ENCODE measurements at regions of chr20 and their contacts with region 1.

Region 1: DNA sequence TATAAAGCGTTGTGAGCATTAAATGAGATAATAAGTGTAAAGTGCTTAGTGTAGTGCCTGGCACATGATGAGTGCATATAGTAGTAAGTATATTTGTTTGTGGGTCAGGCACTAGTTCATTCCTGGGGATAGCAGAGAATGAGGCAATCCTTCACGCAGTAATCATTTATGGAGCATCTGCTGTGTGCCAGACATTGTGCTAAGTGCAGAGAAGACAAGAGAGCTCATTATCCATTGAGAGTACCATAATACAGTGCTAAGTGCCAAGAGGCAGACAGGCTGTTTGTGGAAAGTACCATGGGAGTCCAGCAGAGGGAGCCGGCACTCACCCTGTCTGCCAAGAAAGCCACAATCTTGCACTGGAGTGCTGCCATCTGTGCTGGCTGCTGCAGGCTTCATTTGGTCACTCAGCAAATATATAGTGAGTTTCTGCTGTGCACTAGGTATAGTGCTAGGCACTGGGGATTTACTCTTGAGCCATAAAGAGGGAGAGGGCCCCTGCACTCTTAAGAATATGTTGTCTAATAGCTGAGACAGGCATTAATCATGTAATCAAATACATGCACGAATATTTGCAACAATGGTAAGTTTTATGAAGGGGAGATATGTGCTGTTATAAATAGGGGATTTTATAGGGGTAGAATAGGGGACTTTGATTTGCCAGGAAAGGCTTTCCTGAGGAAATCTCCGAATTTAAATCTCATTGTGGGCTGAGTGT is 12.9 kb upstream of the MROH8 start:
- DNase-seq: no peak
- ATAC-seq: peak; percentile 88
- H3K4me3 ChIP-seq: no peak overlapping the region
- H3K27ac ChIP-seq: no peak overlapping the region
- H3K4me1 ChIP-seq: peaks cover 17% of the 10 kb centered on the region
- H3K27me3 ChIP-seq: no peaks in the 10 kb centered on the region
- CTCF ChIP-seq: peak; percentile 80 to 92 (median 91)
- EP300 ChIP-seq: no peak
- POLR2A ChIP-seq: no peak
- RAD21 ChIP-seq: peak; percentile 17; the same call in 1 of the 2 replicates

Region 2: DNA sequence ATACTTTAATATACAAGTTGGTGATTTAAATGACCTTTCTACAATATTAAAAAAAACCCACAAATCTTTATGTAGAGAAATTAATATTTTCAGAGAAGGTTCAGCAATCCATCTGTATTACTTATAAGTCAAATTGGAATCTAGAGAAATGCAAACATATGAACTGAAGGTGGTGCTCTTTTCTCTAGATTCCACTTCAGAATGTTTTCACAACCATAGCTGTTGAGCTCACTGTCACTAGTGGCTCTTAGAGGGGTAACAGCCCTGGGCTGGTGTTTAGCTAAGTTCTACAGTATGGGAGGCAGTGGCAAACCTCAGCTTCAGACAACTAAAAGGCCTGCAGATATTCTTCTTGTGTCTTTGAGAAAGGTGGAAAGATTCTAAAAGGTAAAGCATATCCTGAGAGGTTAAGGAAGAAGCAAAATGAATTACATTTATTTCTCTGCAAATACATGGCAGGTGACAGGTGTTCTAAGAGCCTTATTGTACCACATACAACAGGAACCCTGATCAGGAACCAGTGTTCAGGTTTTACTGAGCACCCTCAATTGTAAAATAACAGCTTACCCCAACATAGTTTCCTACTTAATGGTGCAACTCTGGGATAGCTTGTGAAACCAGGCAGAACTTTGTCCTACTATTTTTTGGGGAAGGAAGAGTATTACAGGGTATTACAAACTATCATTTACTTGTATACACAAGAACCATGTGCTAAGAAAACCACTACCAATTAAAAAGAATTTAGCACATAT is 184.2 kb before region 1 on chr20:
- CTCF ChIA-PET with region 1: interaction called, 35 read pairs
- POLR2A ChIA-PET with region 1: no interaction called
- RAD21 ChIA-PET with region 1: interaction called, 17 read pairs
- SMC1A ChIA-PET with region 1: interaction called, 8 read pairs
- in situ Hi-C with region 1: no loop called
- intact Hi-C with region 1: no loop called
- DNase-seq: no peak
- ATAC-seq: peak; percentile 85
- H3K4me3 ChIP-seq: no peak overlapping the region
- H3K27ac ChIP-seq: peak overlapping the region; percentile 37; the same call in 1 of the 2 replicates
- H3K4me1 ChIP-seq: peaks cover 23% of the 10 kb centered on the region
- H3K27me3 ChIP-seq: no peaks in the 10 kb centered on the region
- CTCF ChIP-seq: peak; percentile 33 to 36 (median 36); a peak in 4 of 6 replicates
- EP300 ChIP-seq: no peak
- POLR2A ChIP-seq: no peak
- RAD21 ChIP-seq: peak; percentile 60

Region 3: GRCh38 chr20:37202267-37202943 is 10.1 kb after region 1 on chr20:
- CTCF ChIA-PET with region 1: interaction called, 45 read pairs
- POLR2A ChIA-PET with region 1: interaction called, 3 read pairs
- RAD21 ChIA-PET with region 1: no interaction called
- SMC1A ChIA-PET with region 1: interaction called, 5 read pairs
- in situ Hi-C with region 1: no loop called
- intact Hi-C with region 1: no loop called
- DNase-seq: no peak
- ATAC-seq: peak; percentile 59; the same call in 2 of the 3 replicates
- H3K4me3 ChIP-seq: no peak overlapping the region
- H3K27ac ChIP-seq: no peak overlapping the region
- H3K4me1 ChIP-seq: no peaks in the 10 kb centered on the region
- H3K27me3 ChIP-seq: no peaks in the 10 kb centered on the region
- CTCF ChIP-seq: peak; percentile 43 to 62 (median 56)
- EP300 ChIP-seq: no peak
- POLR2A ChIP-seq: no peak
- RAD21 ChIP-seq: no peak

Region 4: DNA sequence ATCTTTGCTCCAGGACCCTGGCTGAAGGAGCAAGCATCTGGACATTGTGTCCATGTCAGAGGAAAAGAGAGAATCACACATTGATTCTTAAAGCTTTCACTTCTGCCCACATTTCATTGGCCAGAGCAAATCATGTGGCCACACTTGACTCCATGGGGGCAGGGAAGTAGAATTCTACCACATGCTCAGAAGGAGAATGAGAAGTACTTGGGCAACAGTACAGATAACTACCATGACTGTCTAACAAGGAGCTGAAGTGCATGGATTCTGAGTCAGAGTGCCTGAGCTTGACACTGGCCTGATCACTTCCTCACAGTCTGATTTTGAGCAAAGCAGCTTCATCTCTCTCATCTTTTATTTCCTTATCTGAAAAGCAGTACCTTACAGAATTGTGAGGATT is 30.8 kb after region 1 on chr20:
- CTCF ChIA-PET with region 1: interaction called, 11 read pairs
- POLR2A ChIA-PET with region 1: no interaction called
- RAD21 ChIA-PET with region 1: interaction called, 5 read pairs
- SMC1A ChIA-PET with region 1: interaction called, 19 read pairs
- in situ Hi-C with region 1: no loop called
- intact Hi-C with region 1: no loop called
- DNase-seq: no peak
- ATAC-seq: peak; percentile 84
- H3K4me3 ChIP-seq: no peak overlapping the region
- H3K27ac ChIP-seq: no peak overlapping the region
- H3K4me1 ChIP-seq: no peaks in the 10 kb centered on the region
- H3K27me3 ChIP-seq: no peaks in the 10 kb centered on the region
- CTCF ChIP-seq: no peak
- EP300 ChIP-seq: no peak
- POLR2A ChIP-seq: no peak
- RAD21 ChIP-seq: no peak

Region 5: DNA sequence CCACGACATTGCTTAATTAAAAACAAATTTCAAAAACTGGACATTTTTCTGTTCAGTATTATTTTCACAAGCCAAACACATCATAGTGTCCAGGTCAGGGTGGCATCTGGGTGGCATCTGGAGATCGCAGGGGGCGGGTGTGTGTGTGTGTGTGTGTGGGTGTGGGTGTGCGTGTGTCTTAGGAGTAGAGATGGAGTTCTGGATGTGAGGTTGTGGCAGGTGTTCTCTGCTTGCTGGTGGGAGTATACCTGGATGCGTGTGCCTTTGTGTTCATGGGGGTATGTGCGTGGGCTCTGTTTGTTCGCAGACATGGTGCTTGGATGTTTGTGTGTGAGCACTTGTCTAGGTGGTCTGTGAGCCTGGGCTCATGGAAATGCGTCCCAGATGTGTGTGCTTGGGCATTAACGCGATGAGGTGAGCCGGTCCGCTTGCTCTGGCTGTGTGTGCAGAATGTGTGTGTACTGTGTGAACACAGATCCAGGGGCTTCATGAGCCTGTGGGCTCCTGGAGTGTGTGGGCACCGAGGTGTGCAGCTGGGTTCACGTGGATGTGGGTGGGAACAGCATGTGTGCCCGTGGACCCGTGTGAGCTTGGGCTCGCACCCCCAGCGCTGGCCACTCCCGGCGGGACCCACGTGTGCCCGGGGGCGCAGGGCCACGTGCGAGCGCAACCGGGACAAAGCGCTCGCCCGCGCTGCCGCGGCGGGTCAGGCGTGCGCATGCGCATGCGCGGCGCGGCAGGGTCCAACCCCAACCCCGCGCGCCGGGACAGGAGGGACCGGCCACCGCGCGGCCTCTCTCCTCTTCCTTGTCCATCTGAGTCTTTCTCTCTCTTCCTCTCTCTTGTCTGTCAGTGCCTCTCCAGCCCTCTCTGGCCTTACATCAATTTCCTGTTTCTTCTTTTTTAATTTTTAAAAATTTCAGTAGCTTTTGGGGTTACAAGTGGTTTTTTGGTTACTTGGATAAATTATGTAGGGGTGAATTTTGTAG is 214.0 kb after region 1 on chr20:
- CTCF ChIA-PET with region 1: no interaction called
- POLR2A ChIA-PET with region 1: no interaction called
- RAD21 ChIA-PET with region 1: no interaction called
- SMC1A ChIA-PET with region 1: no interaction called
- in situ Hi-C with region 1: no loop called
- intact Hi-C with region 1: loop called (anchors 10 kb)
- DNase-seq: no peak
- ATAC-seq: peak; percentile 68
- H3K4me3 ChIP-seq: peak overlapping the region; percentile 41; the same call in 1 of the 2 replicates
- H3K27ac ChIP-seq: no peak overlapping the region
- H3K4me1 ChIP-seq: peaks cover 23% of the 10 kb centered on the region
- H3K27me3 ChIP-seq: no peaks in the 10 kb centered on the region
- CTCF ChIP-seq: no peak
- EP300 ChIP-seq: no peak
- POLR2A ChIP-seq: peak; percentile 78
- RAD21 ChIP-seq: no peak

Region 6: DNA sequence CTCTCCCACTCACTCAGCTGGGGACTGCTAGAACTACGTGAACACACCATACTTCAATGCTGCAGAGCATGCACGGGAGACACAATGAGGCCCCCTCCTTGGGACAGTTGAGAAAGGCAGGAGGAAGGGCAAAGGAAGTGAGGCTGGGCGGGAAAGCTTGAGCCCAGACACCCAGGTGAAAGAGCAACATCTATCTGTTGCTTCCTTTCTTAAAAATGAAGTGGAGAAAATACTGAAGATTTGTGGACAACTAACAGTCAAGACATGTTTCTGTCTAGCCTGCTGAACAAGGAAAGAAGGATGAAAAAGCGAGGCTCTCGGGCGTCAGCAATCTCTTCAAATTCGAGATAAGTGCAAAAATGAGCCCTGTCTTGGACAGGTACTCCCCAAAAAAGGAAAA is 325.8 kb after region 1 on chr20:
- CTCF ChIA-PET with region 1: no interaction called
- POLR2A ChIA-PET with region 1: no interaction called
- RAD21 ChIA-PET with region 1: no interaction called
- SMC1A ChIA-PET with region 1: no interaction called
- in situ Hi-C with region 1: no loop called
- intact Hi-C with region 1: no loop called
- DNase-seq: no peak
- ATAC-seq: no peak
- H3K4me3 ChIP-seq: no peak overlapping the region
- H3K27ac ChIP-seq: no peak overlapping the region
- H3K4me1 ChIP-seq: no peaks in the 10 kb centered on the region
- H3K27me3 ChIP-seq: no peaks in the 10 kb centered on the region
- CTCF ChIP-seq: no peak
- EP300 ChIP-seq: no peak
- POLR2A ChIP-seq: no peak
- RAD21 ChIP-seq: no peak

Region 7: DNA sequence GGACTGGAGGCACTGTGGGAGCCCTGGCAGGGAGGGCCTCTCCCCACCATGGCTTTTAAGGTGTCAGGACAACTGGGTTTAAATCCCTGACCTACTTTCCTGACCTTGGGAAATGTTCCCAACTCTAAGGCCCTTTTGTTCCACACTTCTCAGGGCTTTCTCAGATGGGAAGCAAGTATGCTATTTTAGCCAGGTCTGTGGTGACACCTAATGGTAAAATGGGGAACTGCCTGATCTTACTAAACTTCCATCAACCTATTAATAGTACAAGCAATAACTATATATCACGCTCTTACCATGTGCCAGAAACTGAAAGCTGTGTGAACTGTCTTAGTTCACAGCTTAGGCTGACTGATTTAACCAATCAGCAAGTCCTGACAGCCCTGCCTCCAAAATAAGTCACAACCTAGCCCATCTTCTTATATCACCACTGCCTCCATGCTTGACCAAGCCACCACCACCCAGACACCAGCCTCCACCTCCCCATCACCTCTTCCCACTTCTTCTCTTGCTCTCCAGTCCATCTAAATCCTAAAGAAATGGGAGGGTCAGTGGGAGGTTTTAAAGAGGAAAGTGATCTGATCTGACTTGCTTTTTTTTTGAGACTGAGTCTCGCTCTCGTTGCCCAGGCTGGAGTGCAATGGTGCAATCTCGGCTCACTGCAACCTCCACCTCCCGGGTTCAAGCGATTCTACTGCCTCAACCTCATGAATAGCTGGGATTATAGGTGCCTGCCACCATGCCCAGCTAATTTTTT is 342.3 kb after region 1 on chr20:
- CTCF ChIA-PET with region 1: interaction called, 200 read pairs
- POLR2A ChIA-PET with region 1: interaction called, 3 read pairs
- RAD21 ChIA-PET with region 1: interaction called, 20 read pairs
- SMC1A ChIA-PET with region 1: interaction called, 33 read pairs
- in situ Hi-C with region 1: loop called (anchors 5 kb)
- intact Hi-C with region 1: loop called (anchors 1 kb)
- DNase-seq: peak; percentile 90
- ATAC-seq: peak; percentile 98
- H3K4me3 ChIP-seq: no peak overlapping the region
- H3K27ac ChIP-seq: peak overlapping the region; percentile 57
- H3K4me1 ChIP-seq: peaks cover 18% of the 10 kb centered on the region
- H3K27me3 ChIP-seq: no peaks in the 10 kb centered on the region
- CTCF ChIP-seq: peak; percentile 69 to 88 (median 77)
- EP300 ChIP-seq: peak; percentile 47 to 59; a peak in 2 of 4 replicates
- POLR2A ChIP-seq: no peak
- RAD21 ChIP-seq: peak; percentile 97